ENCODE measurements at regions of chr19 and their contacts with region 1.

Region 1: DNA sequence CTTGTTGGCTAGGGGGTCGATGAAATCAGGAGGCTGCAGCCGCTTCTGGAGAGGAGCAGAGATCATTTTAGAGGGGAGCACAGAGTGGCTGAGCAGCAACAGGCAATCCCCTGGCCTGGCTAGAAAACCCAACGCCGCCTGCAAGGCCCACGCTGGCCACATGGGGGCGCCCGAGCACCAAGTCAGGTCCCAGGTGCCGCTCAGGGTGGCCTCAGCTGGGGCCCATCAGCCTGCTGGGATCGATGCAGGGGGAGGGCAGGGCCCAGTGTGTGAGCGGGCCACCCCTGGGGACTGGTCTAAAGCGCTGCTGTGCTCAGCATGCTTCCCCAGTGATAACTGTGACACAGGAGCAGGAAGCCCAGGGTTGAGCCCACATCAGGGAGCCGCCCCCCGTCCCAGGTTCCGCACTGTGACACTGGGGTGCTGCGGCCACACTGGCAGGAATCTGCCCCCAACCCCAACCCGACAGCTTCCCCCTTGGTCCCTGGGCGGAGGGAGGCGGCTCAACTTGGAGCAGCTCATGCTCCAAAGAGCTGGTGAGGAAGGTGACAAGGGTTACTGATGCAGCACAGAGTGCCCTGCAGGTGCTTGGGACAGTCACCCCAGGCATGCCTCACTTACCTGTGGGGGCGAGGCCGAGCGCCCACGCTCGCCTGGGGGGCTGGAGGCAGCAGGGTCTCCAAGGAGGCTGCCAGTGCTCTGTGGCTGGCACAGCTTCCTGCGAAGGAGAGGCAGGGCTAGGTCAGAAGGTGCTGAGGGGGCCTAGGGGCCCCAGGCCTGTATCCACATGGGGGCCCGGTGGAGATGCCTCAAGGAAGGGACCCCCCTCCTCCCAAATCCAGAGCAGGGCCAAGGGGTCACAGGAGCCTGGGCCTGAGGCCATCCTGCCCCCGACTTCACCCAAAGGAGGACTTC is 13.3 kb upstream of the ISYNA1 start:
- DNase-seq: peak; percentile 87
- ATAC-seq: peak; percentile 77 to 87

Region 2: GRCh38 chr19:18768046-18768771 is 317.0 kb after region 1 on chr19:
- intact Hi-C with region 1: loop called in 1 of 2 experiments (anchors 5 kb)
- DNase-seq: no peak
- ATAC-seq: peak; percentile 9 to 27

Region 3: DNA sequence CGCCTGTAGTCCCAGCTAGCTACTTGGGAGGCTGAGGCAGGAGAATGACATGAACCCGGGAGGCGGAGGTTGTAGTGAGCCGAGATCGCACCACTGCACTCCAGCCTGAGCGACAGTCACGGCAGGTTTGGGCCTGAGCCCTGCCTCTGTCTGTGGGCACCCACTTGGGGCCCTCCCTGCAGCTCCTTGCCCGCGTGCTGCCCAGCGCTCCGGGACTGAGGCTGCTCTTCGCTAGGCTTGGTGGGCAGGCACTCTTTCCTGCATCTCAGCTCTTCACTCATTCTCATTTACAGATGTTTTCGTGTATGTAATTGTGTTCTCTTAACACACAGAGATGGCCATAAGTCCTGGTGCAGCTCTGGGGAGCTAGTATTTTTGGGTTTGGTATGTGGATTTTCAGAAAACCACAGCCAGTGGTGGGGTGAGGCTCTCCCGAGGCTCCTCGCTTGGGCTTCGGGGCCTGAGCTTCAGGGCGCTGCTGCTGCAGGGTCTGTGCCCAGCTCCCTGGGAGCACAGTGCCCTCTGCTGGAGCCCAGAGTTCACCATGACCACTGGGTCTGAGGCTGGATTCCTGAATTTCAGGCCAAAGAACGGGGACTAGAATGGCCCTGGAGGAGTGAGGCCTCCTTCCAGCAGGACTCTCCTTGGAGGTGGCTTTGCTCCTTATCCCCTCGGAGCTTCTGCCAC is 395.8 kb after region 1 on chr19:
- intact Hi-C with region 1: loop called in 1 of 2 experiments (anchors 10 kb)
- DNase-seq: peak; percentile 84
- ATAC-seq: peak; percentile 80 to 86

Region 4: DNA sequence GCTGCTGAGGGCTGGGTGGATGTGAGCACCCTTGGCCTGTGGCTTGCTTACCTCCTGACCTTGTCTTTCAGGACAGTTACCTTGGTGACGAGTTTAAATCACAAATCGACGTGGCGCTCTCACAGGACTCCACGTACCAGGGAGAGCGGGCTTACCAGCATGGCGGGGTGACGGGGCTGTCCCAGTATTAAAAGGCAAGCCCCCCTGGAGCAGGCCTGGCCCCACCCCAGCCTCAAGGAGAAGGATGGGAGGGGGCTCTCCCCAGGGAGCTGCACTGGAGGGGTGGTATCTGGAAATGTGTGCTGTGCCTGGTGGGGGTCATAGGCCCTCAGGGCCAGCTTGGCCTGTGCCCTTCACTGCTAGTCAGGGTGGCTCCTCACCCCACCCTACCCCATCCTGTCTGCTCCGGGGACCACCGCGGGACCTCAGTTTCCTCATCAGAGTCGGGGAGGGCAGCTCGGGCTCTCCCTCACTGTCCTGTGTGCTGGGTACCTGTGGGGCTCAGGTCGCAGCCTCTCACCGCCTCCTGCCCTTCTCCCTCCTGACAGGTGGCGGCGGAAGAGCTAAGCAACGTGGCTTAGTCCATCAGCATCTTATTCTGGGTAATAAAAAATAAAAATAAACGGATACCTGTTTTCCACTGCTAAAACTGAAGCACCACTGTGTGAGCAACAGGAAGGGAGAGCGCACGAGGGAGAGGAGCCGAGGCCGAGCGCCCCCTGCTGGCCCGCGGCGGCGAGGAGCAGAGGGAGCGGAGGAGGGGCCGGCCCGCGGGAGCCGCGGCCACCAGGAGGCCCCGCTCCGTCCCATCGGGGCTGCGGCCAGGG is 415.0 kb after region 1 on chr19:
- intact Hi-C with region 1: loop called in 1 of 2 experiments (anchors 10 kb)
- DNase-seq: peak; percentile 67
- ATAC-seq: peak; percentile 73 to 88

Measured in left cardiac atrium (tissue), 4 donors.